CD8-positive, alpha-beta memory T cell (primary cell): ENCODE measurements at regions of chr9 and their contacts with region 1.

Region 1: GRCh38 chr9:20622330-20623020 is at the start of gene MLLT3:
- DNase-seq: peak; percentile 95 to 98 (median 96)
- H3K4me3 ChIP-seq: peak within 1 kb of the TSS; percentile 72
- H3K4me3 Mint-ChIP-seq: peak within 1 kb of the TSS; percentile 93 to 99 (median 99)
- H3K27ac ChIP-seq: peak within 1 kb of the TSS; percentile 66
- H3K27ac Mint-ChIP-seq: peak within 1 kb of the TSS; percentile 94 to 99 (median 97)
- H3K4me1 ChIP-seq: peaks cover 36% of the 10 kb centered on the region
- H3K4me1 Mint-ChIP-seq: peaks cover 40 to 55% (median 50%) of the 10 kb centered on the region in 3 donors
- H3K27me3 ChIP-seq: no peaks in the 10 kb centered on the region
- H3K27me3 Mint-ChIP-seq: peaks cover 0 to 9% of the 10 kb centered on the region in 2 donors
- total RNA-seq, gene MLLT3: 36.8 to 37.0 TPM

Region 2: GRCh38 chr9:20315677-20316076 is 306.8 kb before region 1 on chr9:
- CTCF ChIA-PET with region 1: no interaction called
- POLR2A ChIA-PET with region 1: no interaction called
- DNase-seq: peak in 1 of 5 donors; percentile 6
- H3K4me3 ChIP-seq: peak overlapping the region; percentile 4
- H3K4me3 Mint-ChIP-seq: no peak overlapping the region
- H3K27ac ChIP-seq: no peak overlapping the region
- H3K27ac Mint-ChIP-seq: peak overlapping the region in 3 of 8 donors; percentile 39 to 62 (median 57)
- H3K4me1 ChIP-seq: peaks cover 51% of the 10 kb centered on the region
- H3K4me1 Mint-ChIP-seq: peaks cover 26 to 51% (median 49%) of the 10 kb centered on the region in 3 donors
- H3K27me3 ChIP-seq: no peaks in the 10 kb centered on the region
- H3K27me3 Mint-ChIP-seq: no peaks in the 10 kb centered on the region

Region 3: GRCh38 chr9:20532584-20532983 is 89.9 kb before region 1 on chr9:
- CTCF ChIA-PET with region 1: no interaction called
- POLR2A ChIA-PET with region 1: no interaction called
- DNase-seq: no peak
- H3K4me3 ChIP-seq: no peak overlapping the region
- H3K4me3 Mint-ChIP-seq: no peak overlapping the region
- H3K27ac ChIP-seq: no peak overlapping the region
- H3K27ac Mint-ChIP-seq: no peak overlapping the region
- H3K4me1 ChIP-seq: peaks cover 36% of the 10 kb centered on the region
- H3K4me1 Mint-ChIP-seq: peaks cover 43 to 83% (median 80%) of the 10 kb centered on the region in 3 donors
- H3K27me3 ChIP-seq: no peaks in the 10 kb centered on the region
- H3K27me3 Mint-ChIP-seq: no peaks in the 10 kb centered on the region

Region 4: GRCh38 chr9:20552874-20553575 is 69.5 kb before region 1 on chr9:
- CTCF ChIA-PET with region 1: interaction called, 11 read pairs
- POLR2A ChIA-PET with region 1: interaction called, 6 read pairs
- DNase-seq: peak in 1 of 5 donors; percentile 5
- H3K4me3 ChIP-seq: no peak overlapping the region
- H3K4me3 Mint-ChIP-seq: peak overlapping the region in 5 of 7 donors; percentile 1 to 52 (median 35)
- H3K27ac ChIP-seq: no peak overlapping the region
- H3K27ac Mint-ChIP-seq: peak overlapping the region in 4 of 8 donors; percentile 0 to 42 (median 24)
- H3K4me1 ChIP-seq: peaks cover 42% of the 10 kb centered on the region
- H3K4me1 Mint-ChIP-seq: peaks cover 66 to 86% (median 84%) of the 10 kb centered on the region in 3 donors
- H3K27me3 ChIP-seq: no peaks in the 10 kb centered on the region
- H3K27me3 Mint-ChIP-seq: no peaks in the 10 kb centered on the region

Region 5: GRCh38 chr9:20684035-20684872 is 61.8 kb after region 1 on chr9 and contains the start of gene FOCAD:
- CTCF ChIA-PET with region 1: interaction called, 8 read pairs
- POLR2A ChIA-PET with region 1: interaction called, 27 read pairs
- DNase-seq: peak; percentile 93 to 97 (median 95)
- H3K4me3 ChIP-seq: peak within 1 kb of the TSS; percentile 93
- H3K4me3 Mint-ChIP-seq: peak within 1 kb of the TSS; percentile 87 to 97 (median 95)
- H3K27ac ChIP-seq: peak within 1 kb of the TSS; percentile 62
- H3K27ac Mint-ChIP-seq: peak within 1 kb of the TSS; percentile 81 to 97 (median 89)
- H3K4me1 ChIP-seq: peaks cover 11% of the 10 kb centered on the region
- H3K4me1 Mint-ChIP-seq: peaks cover 17 to 25% (median 20%) of the 10 kb centered on the region in 3 donors
- H3K27me3 ChIP-seq: no peaks in the 10 kb centered on the region
- H3K27me3 Mint-ChIP-seq: no peaks in the 10 kb centered on the region
- total RNA-seq, gene FOCAD: 24.8 to 25.9 TPM

Region 6: GRCh38 chr9:20754556-20754955 is 132.1 kb after region 1 on chr9:
- CTCF ChIA-PET with region 1: no interaction called
- POLR2A ChIA-PET with region 1: no interaction called
- DNase-seq: no peak
- H3K4me3 ChIP-seq: no peak overlapping the region
- H3K4me3 Mint-ChIP-seq: no peak overlapping the region
- H3K27ac ChIP-seq: no peak overlapping the region
- H3K27ac Mint-ChIP-seq: peak overlapping the region in 1 of 8 donors; percentile 1
- H3K4me1 ChIP-seq: no peaks in the 10 kb centered on the region
- H3K4me1 Mint-ChIP-seq: no peaks in the 10 kb centered on the region
- H3K27me3 ChIP-seq: no peaks in the 10 kb centered on the region
- H3K27me3 Mint-ChIP-seq: no peaks in the 10 kb centered on the region

Region 7: GRCh38 chr9:20941174-20941690 is 318.8 kb after region 1 on chr9:
- CTCF ChIA-PET with region 1: interaction called, 14 read pairs
- POLR2A ChIA-PET with region 1: interaction called, 7 read pairs
- DNase-seq: peak; percentile 6 to 65 (median 49)
- H3K4me3 ChIP-seq: no peak overlapping the region
- H3K4me3 Mint-ChIP-seq: peak overlapping the region in 1 of 7 donors; percentile 2
- H3K27ac ChIP-seq: no peak overlapping the region
- H3K27ac Mint-ChIP-seq: peak overlapping the region in 1 of 8 donors; percentile 3
- H3K4me1 ChIP-seq: no peaks in the 10 kb centered on the region
- H3K4me1 Mint-ChIP-seq: peaks cover 0 to 5% (median 4%) of the 10 kb centered on the region in 3 donors
- H3K27me3 ChIP-seq: no peaks in the 10 kb centered on the region
- H3K27me3 Mint-ChIP-seq: no peaks in the 10 kb centered on the region

Region 8: GRCh38 chr9:21443849-21444625 is 821.6 kb after region 1 on chr9:
- CTCF ChIA-PET with region 1: no interaction called
- POLR2A ChIA-PET with region 1: no interaction called
- DNase-seq: peak in 2 of 5 donors; percentile 68 to 70
- H3K4me3 ChIP-seq: no peak overlapping the region
- H3K4me3 Mint-ChIP-seq: peak overlapping the region; percentile 1 to 66 (median 60)
- H3K27ac ChIP-seq: no peak overlapping the region
- H3K27ac Mint-ChIP-seq: peak overlapping the region in 7 of 8 donors; percentile 11 to 84 (median 68)
- H3K4me1 ChIP-seq: peaks cover 15% of the 10 kb centered on the region
- H3K4me1 Mint-ChIP-seq: peaks cover 15 to 16% (median 16%) of the 10 kb centered on the region in 3 donors
- H3K27me3 ChIP-seq: no peaks in the 10 kb centered on the region
- H3K27me3 Mint-ChIP-seq: peaks cover 0 to 11% of the 10 kb centered on the region in 2 donors